ENCODE measurements at regions of chr18 and their contacts with region 1.

Region 1: DNA sequence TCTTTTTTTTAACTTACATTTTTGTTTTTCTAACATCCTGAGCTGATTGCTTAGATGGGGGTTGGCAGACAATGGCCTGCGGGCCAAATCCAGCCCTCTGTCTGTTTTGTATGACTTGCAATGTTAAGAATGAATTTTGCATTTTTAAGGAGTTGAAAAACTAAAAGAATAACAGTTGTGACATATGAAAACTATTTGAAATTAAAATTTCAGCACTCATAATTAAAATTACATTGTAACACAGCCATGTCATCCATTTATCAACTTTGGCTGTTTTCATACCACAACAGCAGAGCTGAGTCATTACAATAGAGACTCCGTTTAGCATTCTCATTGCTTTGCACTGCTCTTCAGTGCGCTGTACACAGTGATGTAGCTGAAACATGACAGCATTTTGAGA is 94.1 kb upstream of the MC4R start:
- DNase-seq: no peak
- H3K4me3 ChIP-seq: no peak overlapping the region
- H3K27ac ChIP-seq: no peak overlapping the region
- H3K4me1 ChIP-seq: no peaks in the 10 kb centered on the region
- H3K27me3 ChIP-seq: no peaks in the 10 kb centered on the region
- CTCF ChIP-seq: no peak

Region 2: GRCh38 chr18:60668583-60668982 is 201.9 kb after region 1 on chr18:
- intact Hi-C with region 1: no loop called
- DNase-seq: no peak
- H3K4me3 ChIP-seq: no peak overlapping the region
- H3K27ac ChIP-seq: no peak overlapping the region
- H3K4me1 ChIP-seq: no peaks in the 10 kb centered on the region
- H3K27me3 ChIP-seq: no peaks in the 10 kb centered on the region
- CTCF ChIP-seq: no peak

Region 3: GRCh38 chr18:60809937-60810336 is 343.3 kb after region 1 on chr18:
- intact Hi-C with region 1: loop called (anchors 5 kb)
- DNase-seq: no peak
- H3K4me3 ChIP-seq: no peak overlapping the region
- H3K27ac ChIP-seq: no peak overlapping the region
- H3K4me1 ChIP-seq: no peaks in the 10 kb centered on the region
- H3K27me3 ChIP-seq: no peaks in the 10 kb centered on the region
- CTCF ChIP-seq: no peak

Measured in tibial artery (tissue), 4 donors.